ENCODE measurements at regions of chr20 and their contacts with region 1.

Region 1: GRCh38 chr20:50153485-50154377 is at the start of gene PEDS1:
- DNase-seq: peak; percentile 93 to 97
- ATAC-seq: peak; percentile 87 to 91 (median 88)
- H3K4me3 ChIP-seq: peak within 1 kb of the TSS; percentile 97
- H3K27ac ChIP-seq: peak within 1 kb of the TSS; percentile 96
- H3K4me1 ChIP-seq: peaks cover 34% of the 10 kb centered on the region
- H3K27me3 ChIP-seq: no peaks in the 10 kb centered on the region
- CTCF ChIP-seq: peak; percentile 21
- total RNA-seq, gene PEDS1: 17.5 to 59.2 (median 35.0) TPM

Region 2: DNA sequence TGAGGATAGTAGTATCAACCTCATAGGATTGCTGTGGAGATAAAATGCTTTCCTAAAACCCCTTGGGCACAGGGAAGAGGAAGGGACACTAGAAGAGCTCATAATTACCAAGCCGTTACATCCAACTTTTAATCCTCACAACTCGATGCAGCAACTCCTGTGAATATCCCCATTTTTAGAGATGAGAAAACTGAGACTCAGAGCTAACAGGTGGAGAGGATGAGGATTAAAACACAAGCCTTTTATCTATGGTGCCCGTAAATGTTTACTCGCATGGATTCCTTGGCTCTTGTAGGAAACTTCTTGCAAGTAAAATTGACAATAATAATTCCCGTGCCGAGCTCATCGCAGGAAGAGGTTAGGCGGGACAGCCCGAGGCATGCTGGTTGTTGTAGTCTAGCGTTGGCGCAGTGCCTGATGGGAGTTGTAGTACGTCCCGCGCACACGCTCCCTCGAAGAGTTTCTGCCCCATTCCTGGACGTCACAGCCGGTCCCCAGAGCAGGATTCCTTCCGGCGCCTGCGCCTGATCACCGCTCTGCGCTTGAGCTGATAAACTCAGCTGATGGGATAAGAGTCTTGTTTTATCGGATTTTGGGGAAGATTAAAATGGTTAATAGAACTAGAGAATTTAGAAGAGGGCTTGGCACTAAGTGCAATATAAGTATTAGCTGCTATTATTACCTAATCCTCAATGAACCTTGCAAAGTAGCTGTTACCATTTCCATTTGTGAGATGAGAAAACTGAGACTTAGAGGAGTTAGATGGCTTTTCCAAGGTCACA is 37.9 kb before region 1 on chr20:
- intact Hi-C with region 1: loop called in 1 of 2 experiments (anchors 5 kb)
- DNase-seq: peak; percentile 96 to 98
- ATAC-seq: peak; percentile 78 to 85 (median 84)
- H3K4me3 ChIP-seq: peak overlapping the region; percentile 75
- H3K27ac ChIP-seq: peak overlapping the region; percentile 97
- H3K4me1 ChIP-seq: peaks cover 45% of the 10 kb centered on the region
- H3K27me3 ChIP-seq: no peaks in the 10 kb centered on the region
- CTCF ChIP-seq: no peak

Region 3: DNA sequence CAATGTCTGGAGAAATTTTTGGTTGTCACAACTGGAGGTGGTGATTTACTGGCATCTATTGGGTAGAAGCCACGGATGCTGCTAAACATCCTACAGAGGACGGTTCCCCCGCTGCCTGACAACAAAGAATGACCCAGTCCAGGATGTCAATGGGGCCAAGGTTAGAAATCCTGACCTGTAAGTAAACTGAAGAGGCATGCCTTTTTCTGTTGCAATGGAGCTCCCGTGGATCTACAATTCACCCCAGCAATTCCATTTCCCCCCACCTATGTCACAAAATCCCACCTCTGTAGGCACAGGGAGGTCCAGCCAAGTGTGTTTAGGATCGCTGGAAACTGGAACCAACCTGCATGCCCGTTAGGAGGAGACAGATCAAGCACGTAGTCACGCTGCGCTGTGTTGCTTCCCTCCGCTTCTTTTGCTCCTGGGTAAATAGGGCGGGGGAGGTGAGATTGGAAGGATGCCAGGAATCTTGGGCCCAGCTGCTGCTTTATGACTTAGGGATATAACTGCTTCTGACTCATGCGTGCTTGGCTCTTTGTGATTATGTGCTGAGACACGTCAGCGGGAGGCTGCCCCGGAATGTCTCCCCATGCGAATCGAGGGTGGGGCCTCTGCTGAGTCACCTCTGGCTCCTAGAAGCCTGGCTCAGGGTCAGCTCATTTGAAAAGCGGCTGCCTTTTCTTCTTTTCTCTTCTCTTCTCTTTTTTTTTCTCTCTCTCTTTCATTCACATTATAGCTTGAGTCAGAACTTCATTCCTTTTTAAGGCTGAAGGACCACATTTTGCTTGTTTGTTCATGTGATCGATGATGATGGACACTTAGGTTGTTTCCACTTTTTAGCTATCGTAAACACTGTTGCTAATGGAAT is 12.2 kb after region 1 on chr20:
- intact Hi-C with region 1: loop called in 1 of 2 experiments (anchors 1 kb)
- DNase-seq: peak; percentile 97 to 98
- ATAC-seq: peak; percentile 94 to 95 (median 95)
- H3K4me3 ChIP-seq: peak overlapping the region; percentile 54
- H3K27ac ChIP-seq: peak overlapping the region; percentile 92
- H3K4me1 ChIP-seq: peaks cover 39% of the 10 kb centered on the region
- H3K27me3 ChIP-seq: no peaks in the 10 kb centered on the region
- CTCF ChIP-seq: no peak